Naive thymus-derived CD4-positive, alpha-beta T cell (primary cell): ENCODE measurements at regions of chr7 and their contacts with region 1.

Region 1: GRCh38 chr7:143408686-143409561 is at the start of gene EPHA1:
- DNase-seq: peak in 7 of 9 donors; percentile 52 to 67 (median 62)
- ATAC-seq: peak; percentile 83
- H3K4me3 ChIP-seq: peak within 1 kb of the TSS; percentile 59
- H3K4me3 Mint-ChIP-seq: peak within 1 kb of the TSS; percentile 77 to 98 (median 94)
- H3K27ac ChIP-seq: peak within 1 kb of the TSS; percentile 69
- H3K27ac Mint-ChIP-seq: peak within 1 kb of the TSS; percentile 61 to 97 (median 94)
- H3K4me1 ChIP-seq: peaks cover 31 to 44% of the 10 kb centered on the region in 2 donors
- H3K4me1 Mint-ChIP-seq: peaks cover 23 to 88% (median 87%) of the 10 kb centered on the region in 7 donors
- H3K27me3 ChIP-seq: no peaks in the 10 kb centered on the region
- H3K27me3 Mint-ChIP-seq: peaks cover 0 to 14% (median 0%) of the 10 kb centered on the region in 5 donors
- total RNA-seq, gene EPHA1: 4.1 to 63.1 (median 33.6) TPM

Region 2: DNA sequence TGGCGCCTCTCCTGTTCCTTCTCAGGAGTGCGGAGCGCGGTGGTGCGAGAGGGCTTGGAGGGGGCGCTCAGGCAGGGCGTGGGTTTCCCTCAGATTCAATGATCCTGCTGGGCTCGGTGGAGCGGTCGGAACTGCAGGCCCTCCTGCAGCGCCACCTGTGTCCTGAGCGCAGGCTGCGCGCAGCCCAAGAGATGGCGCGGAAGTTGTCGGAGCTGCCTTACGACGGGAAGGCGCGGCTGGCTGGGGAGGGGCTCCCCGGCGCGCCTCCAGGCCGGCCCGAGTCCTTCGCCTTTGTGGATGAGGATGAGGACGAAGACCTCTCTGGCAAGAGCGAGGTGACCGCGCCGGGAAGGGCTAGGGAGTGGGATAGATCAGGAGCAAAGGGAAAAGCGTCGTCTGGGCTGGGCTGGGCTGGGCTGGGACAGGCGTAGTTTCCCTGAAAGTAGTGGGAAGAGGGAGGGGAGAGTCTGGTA is 63.5 kb before region 1 on chr7:
- CTCF ChIA-PET with region 1: interaction called, 3 read pairs
- POLR2A ChIA-PET with region 1: interaction called, 8 read pairs
- intact Hi-C with region 1: loop called in 1 of 2 experiments (anchors 2 kb)
- DNase-seq: peak; percentile 31 to 62 (median 56)
- ATAC-seq: peak; percentile 98
- H3K4me3 ChIP-seq: peak overlapping the region; percentile 29
- H3K4me3 Mint-ChIP-seq: peak overlapping the region; percentile 56 to 87 (median 76)
- H3K27ac ChIP-seq: no peak overlapping the region
- H3K27ac Mint-ChIP-seq: peak overlapping the region in 3 of 9 donors; percentile 3 to 79 (median 56)
- H3K4me1 ChIP-seq: peaks cover 0 to 4% of the 10 kb centered on the region in 2 donors
- H3K4me1 Mint-ChIP-seq: peaks cover 5 to 13% (median 9%) of the 10 kb centered on the region in 7 donors
- H3K27me3 ChIP-seq: no peaks in the 10 kb centered on the region
- H3K27me3 Mint-ChIP-seq: peaks cover 0 to 57% (median 2%) of the 10 kb centered on the region in 5 donors

Region 3: DNA sequence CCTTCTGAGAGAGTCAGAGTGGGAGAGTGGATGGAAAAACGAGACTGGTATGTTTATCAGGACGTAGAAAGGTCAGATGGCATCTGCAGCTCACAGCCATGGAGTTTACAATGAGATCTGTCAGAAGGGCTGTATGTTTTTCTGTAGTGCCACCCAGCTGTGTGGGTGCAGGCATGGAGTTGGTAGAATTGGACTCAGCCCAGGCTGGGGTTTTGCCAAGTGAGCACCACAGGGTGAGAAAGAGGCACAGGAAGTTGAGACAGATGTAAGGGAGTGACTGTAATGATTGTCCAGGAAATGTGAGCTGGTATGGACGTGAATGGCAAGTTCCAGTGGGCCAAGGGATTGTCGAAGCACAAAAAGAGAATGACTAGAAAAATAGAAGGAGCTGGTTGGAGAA is 36.9 kb before region 1 on chr7:
- CTCF ChIA-PET with region 1: interaction called, 20 read pairs
- POLR2A ChIA-PET with region 1: interaction called, 223 read pairs
- intact Hi-C with region 1: loop called in 1 of 2 experiments (anchors 5 kb)
- DNase-seq: peak in 5 of 9 donors; percentile 38 to 64 (median 46)
- ATAC-seq: peak; percentile 76
- H3K4me3 ChIP-seq: no peak overlapping the region
- H3K4me3 Mint-ChIP-seq: peak overlapping the region in 9 of 10 donors; percentile 13 to 67 (median 45)
- H3K27ac ChIP-seq: no peak overlapping the region
- H3K27ac Mint-ChIP-seq: peak overlapping the region in 8 of 9 donors; percentile 3 to 90 (median 70)
- H3K4me1 ChIP-seq: peaks cover 36 to 40% of the 10 kb centered on the region in 2 donors
- H3K4me1 Mint-ChIP-seq: peaks cover 34 to 59% (median 55%) of the 10 kb centered on the region in 7 donors
- H3K27me3 ChIP-seq: no peaks in the 10 kb centered on the region
- H3K27me3 Mint-ChIP-seq: peaks cover 0 to 22% (median 0%) of the 10 kb centered on the region in 5 donors

Region 4: GRCh38 chr7:143385891-143386781 is 22.8 kb before region 1 on chr7:
- CTCF ChIA-PET with region 1: interaction called, 40 read pairs
- POLR2A ChIA-PET with region 1: interaction called, 223 read pairs
- intact Hi-C with region 1: loop called in 1 of 2 experiments (anchors 1 kb)
- DNase-seq: peak in 5 of 9 donors; percentile 36 to 58 (median 51)
- ATAC-seq: peak; percentile 64
- H3K4me3 ChIP-seq: peak overlapping the region; percentile 51
- H3K4me3 Mint-ChIP-seq: no peak overlapping the region
- H3K27ac ChIP-seq: peak overlapping the region; percentile 59
- H3K27ac Mint-ChIP-seq: no peak overlapping the region
- H3K4me1 ChIP-seq: peaks cover 37 to 38% of the 10 kb centered on the region in 2 donors
- H3K4me1 Mint-ChIP-seq: peaks cover 0 to 14% (median 12%) of the 10 kb centered on the region in 7 donors
- H3K27me3 ChIP-seq: no peaks in the 10 kb centered on the region
- H3K27me3 Mint-ChIP-seq: no peaks in the 10 kb centered on the region